Activated CD8-positive, alpha-beta T cell treated with anti-CD3 and anti-CD28 coated beads for 36 hours (primary cell): ENCODE measurements at regions of chr5 and their contacts with region 1.

Region 1: GRCh38 chr5:132272311-132273210 is 15.1 kb downstream of the PDLIM4 start:
- DNase-seq: peak; percentile 82
- ATAC-seq: peak; percentile 53
- H3K4me3 Mint-ChIP-seq: no peak overlapping the region
- H3K27ac Mint-ChIP-seq: no peak overlapping the region
- H3K4me1 Mint-ChIP-seq: peaks cover 17% of the 10 kb centered on the region
- H3K27me3 Mint-ChIP-seq: peaks cover 9% of the 10 kb centered on the region
- CTCF ChIP-seq: peak; percentile 92

Region 2: DNA sequence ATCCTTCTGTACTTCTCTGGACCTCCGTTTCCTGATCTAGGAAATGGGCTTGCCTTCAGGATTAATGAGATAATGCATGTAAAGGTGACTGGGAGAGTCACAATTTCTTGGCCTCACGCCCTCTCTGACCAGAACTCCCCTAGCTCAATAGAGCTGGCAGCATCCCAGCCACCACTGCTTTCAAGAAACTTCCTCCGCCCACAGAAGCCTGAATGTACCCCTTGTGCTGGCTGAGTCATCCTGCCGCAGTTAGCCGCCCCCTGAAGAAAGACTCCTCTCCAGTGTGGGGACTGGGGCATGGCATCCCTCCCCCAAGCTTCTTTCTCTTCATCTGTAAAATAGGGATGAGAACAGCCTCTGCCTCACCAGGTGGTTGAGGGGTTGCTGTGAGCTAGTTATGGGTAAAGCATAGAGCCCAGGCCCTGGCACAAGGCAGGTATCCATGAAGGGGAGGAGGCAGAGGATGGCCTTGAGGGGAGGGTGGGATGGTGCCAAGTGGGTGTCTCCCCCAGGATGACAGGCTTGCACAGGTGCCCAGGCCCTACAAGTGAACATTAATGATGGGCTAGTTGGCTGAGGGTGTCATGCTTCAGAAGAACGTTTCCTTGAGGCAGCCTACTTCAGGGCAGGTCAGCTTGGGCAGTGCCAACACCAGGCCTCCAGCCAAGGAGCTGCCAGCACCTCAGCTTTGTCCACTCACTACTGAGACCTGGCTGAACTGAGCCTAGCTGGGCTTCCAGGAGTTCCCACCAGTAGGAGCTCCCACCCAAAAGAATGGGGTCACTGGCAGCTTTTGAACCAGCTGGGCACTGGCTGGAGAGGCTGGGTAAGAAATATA is 11.6 kb before region 1 on chr5:
- CTCF ChIA-PET with region 1: interaction called, 20 read pairs
- POLR2A ChIA-PET with region 1: interaction called, 4 read pairs
- intact Hi-C with region 1: no loop called
- DNase-seq: peak; percentile 88
- ATAC-seq: peak; percentile 85
- H3K4me3 Mint-ChIP-seq: peak overlapping the region; percentile 4
- H3K27ac Mint-ChIP-seq: peak overlapping the region; percentile 49
- H3K4me1 Mint-ChIP-seq: peaks cover 40% of the 10 kb centered on the region
- H3K27me3 Mint-ChIP-seq: peaks cover 11% of the 10 kb centered on the region
- CTCF ChIP-seq: no peak

Region 3: GRCh38 chr5:132283423-132284043 is 11.0 kb after region 1 on chr5:
- CTCF ChIA-PET with region 1: interaction called, 14 read pairs
- POLR2A ChIA-PET with region 1: interaction called, 3 read pairs
- intact Hi-C with region 1: no loop called
- DNase-seq: no peak
- ATAC-seq: no peak
- H3K4me3 Mint-ChIP-seq: no peak overlapping the region
- H3K27ac Mint-ChIP-seq: no peak overlapping the region
- H3K4me1 Mint-ChIP-seq: no peaks in the 10 kb centered on the region
- H3K27me3 Mint-ChIP-seq: no peaks in the 10 kb centered on the region
- CTCF ChIP-seq: peak; percentile 39

Region 4: DNA sequence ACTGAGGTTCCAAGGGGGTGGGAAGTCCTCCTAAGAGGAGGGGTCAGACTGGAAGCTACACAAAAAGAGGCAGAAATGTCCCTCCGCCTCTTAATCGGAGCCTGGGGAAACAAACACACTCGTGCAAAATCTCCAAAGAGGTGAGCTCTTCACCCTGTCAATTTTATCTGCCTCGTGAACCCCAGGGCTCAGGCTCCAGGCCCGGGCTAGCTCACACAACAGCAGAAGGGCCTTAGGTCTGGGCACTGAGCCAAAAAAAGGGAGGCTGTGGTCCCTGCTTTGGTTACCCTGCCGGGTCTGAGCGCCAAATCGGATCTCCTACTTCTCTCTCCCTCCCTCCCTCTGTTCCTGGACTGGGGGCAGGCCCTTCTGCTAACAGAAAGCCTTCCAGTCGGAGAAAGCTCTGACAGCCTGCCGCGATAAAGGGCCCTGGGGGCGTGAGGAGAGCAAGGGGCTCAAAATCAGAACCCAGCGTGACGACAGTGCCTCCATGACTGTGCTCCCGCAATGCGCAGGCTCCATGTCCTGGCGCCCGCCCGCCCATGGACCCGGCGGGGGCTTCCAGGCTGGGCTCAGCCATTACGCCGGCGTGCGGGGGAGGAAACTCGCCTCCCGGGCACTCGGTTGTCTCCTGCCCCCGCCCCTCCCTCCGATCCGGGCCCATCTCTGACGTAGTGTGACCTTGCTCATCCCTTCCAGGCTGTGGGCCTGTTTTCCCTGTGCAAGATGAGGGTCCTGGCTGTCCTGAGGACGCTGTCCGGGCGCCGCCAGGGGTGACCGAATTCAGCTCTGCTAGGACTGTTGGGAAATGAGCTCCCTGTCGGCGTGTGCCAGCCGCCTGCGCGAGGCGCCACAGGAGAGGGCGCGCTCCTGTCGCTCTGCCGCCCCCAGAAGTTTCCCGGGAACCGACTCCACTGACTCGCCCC is 20.8 kb after region 1 on chr5:
- CTCF ChIA-PET with region 1: interaction called, 33 read pairs
- POLR2A ChIA-PET with region 1: interaction called, 11 read pairs
- intact Hi-C with region 1: no loop called
- DNase-seq: peak; percentile 92
- ATAC-seq: peak; percentile 54
- H3K4me3 Mint-ChIP-seq: peak overlapping the region; percentile 87
- H3K27ac Mint-ChIP-seq: peak overlapping the region; percentile 95
- H3K4me1 Mint-ChIP-seq: peaks cover 21% of the 10 kb centered on the region
- H3K27me3 Mint-ChIP-seq: peaks cover 8% of the 10 kb centered on the region
- CTCF ChIP-seq: no peak

Region 5: GRCh38 chr5:132369474-132370180 is 97.1 kb after region 1 on chr5 and contains the start of gene SLC22A5:
- CTCF ChIA-PET with region 1: interaction called, 12 read pairs
- POLR2A ChIA-PET with region 1: no interaction called
- intact Hi-C with region 1: no loop called
- DNase-seq: peak; percentile 73
- ATAC-seq: peak; percentile 96
- H3K4me3 Mint-ChIP-seq: peak within 1 kb of the TSS; percentile 82
- H3K27ac Mint-ChIP-seq: peak within 1 kb of the TSS; percentile 84
- H3K4me1 Mint-ChIP-seq: peaks cover 28% of the 10 kb centered on the region
- H3K27me3 Mint-ChIP-seq: no peaks in the 10 kb centered on the region
- CTCF ChIP-seq: no peak
- total RNA-seq, gene SLC22A5: 4.0 to 4.1 TPM